Activated naive CD4-positive, alpha-beta T cell treated with anti-CD3 and anti-CD28 coated beads for 36 hours (primary cell): ENCODE measurements at regions of chr11 and their contacts with region 1.

Region 1: DNA sequence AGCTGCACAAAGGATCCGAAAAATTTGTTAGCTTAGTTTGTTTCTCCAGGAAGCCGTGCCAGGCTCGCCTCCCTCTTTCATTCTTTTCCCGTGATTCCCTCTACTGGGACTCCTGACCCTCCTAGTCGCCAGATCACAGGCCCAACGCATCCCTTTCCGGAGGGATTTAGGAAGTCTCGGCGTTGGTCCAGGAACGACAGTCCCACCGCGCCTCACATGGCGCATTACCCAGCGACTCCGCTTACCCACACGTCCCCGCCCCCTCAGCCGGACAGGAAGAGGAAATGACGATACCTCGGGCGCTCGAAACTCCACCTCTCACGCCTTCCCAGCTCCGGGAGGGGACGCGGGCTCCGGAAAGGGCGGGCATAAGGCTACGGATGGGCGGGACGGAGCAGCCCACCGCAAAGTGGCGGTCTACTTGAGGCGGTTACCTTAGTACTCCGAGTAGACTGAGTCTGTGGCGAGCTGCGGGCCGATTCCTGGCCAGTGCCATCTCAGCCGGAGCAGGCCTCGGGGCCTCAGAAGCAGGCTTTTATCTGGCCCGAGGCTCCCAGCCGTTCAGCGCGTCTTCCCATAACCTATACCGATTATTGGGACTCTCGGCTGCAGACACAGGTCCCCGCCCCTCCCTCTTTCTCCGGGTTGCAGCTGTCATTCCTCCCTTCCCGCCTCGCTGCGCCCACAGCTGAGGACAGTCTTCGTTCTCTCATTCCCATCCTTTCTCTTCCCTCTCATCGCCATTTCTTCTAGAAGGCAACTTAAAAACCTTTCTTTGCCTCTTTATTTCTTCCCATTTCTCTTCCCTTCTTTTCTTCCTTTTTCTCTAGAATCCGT is at the start of gene CCDC15:
- DNase-seq: peak; percentile 97
- H3K4me3 Mint-ChIP-seq: no peak within 1 kb of the TSS
- H3K27ac Mint-ChIP-seq: no peak within 1 kb of the TSS
- H3K4me1 Mint-ChIP-seq: peaks cover 7% of the 10 kb centered on the region
- H3K27me3 Mint-ChIP-seq: no peaks in the 10 kb centered on the region
- total RNA-seq, gene CCDC15: 6.1 to 7.3 TPM

Region 2: DNA sequence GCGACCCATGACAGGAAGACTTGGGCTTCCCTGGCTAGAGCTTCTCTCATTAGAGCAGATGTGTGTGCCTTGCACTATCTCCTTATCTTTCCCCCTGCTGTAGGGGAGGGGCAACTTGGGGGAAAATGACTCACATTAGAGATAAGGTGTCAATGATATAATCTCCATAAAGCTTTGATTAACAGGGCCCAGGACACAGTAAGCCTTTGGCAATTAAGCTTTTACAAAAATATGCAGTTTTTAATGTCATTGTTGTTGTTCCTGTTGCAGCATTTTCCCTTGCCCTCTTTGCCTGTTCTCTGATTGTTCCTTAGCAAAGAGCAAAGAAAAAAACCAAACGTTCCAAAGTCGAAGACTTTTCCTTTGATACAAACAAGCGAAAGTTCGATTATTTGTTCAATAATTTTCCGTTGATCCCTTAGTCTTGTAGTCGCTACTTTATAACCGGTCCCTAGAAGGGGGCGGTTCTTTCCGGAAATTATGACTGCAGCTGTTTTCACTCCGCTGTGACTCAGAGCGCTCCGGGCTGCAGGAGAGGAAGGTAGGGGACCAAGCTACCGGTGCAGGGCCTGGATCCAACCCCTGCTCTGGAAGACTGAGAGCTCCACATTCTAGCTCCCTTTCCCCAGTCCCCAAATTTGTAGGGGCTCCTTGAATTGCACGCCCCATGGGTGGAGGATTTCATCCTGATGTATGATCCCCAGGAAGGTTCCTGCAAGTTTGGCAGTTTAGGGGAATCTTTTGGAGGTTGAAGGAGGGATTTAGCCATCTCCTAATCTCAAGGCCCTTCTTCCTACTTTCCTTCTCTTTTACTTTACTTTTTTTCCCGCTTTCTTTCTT is 838.8 kb before region 1 on chr11 and contains the start of gene VWA5A:
- CTCF ChIA-PET with region 1: no interaction called
- intact Hi-C with region 1: loop called (anchors 10 kb)
- DNase-seq: peak; percentile 93
- H3K4me3 Mint-ChIP-seq: peak within 1 kb of the TSS; percentile 82
- H3K27ac Mint-ChIP-seq: peak within 1 kb of the TSS; percentile 56
- H3K4me1 Mint-ChIP-seq: peaks cover 9% of the 10 kb centered on the region
- H3K27me3 Mint-ChIP-seq: no peaks in the 10 kb centered on the region
- total RNA-seq, gene VWA5A: 9.7 to 11.4 TPM

Region 3: GRCh38 chr11:124746621-124747243 is 207.2 kb before region 1 on chr11:
- CTCF ChIA-PET with region 1: no interaction called
- intact Hi-C with region 1: loop called (anchors 2 kb)
- DNase-seq: peak; percentile 76
- H3K4me3 Mint-ChIP-seq: peak overlapping the region; percentile 83
- H3K27ac Mint-ChIP-seq: peak overlapping the region; percentile 75
- H3K4me1 Mint-ChIP-seq: peaks cover 14% of the 10 kb centered on the region
- H3K27me3 Mint-ChIP-seq: no peaks in the 10 kb centered on the region

Region 4: GRCh38 chr11:124920870-124921609 is 32.9 kb before region 1 on chr11:
- CTCF ChIA-PET with region 1: interaction called, 4 read pairs
- intact Hi-C with region 1: loop called (anchors 1 kb)
- DNase-seq: peak; percentile 83
- H3K4me3 Mint-ChIP-seq: peak overlapping the region; percentile 55
- H3K27ac Mint-ChIP-seq: no peak overlapping the region
- H3K4me1 Mint-ChIP-seq: peaks cover 22% of the 10 kb centered on the region
- H3K27me3 Mint-ChIP-seq: no peaks in the 10 kb centered on the region

Region 5: DNA sequence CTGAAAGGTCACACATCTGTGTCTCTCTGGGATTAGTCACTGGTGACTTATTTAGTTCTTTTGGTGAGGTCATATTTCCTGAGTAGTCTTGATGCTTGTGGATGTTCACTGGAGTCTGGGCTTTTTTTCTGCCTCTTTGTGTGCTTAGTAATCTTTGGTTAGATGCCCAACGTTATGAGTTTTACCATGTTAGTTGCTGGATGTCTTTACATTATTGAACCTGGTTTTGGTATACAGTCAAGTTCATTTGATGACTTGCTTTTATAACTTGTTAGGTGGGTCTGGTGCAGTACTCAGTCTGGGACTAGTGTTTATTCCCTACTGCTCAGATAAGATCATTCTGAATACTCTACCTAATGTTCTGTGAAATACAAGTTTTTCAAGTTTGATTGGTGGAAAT is 83.0 kb after region 1 on chr11:
- CTCF ChIA-PET with region 1: no interaction called
- intact Hi-C with region 1: no loop called
- DNase-seq: no peak
- H3K4me3 Mint-ChIP-seq: no peak overlapping the region
- H3K27ac Mint-ChIP-seq: no peak overlapping the region
- H3K4me1 Mint-ChIP-seq: peaks cover 6% of the 10 kb centered on the region
- H3K27me3 Mint-ChIP-seq: no peaks in the 10 kb centered on the region